ENCODE measurements at regions of chr6 and their contacts with region 1.

Region 1: DNA sequence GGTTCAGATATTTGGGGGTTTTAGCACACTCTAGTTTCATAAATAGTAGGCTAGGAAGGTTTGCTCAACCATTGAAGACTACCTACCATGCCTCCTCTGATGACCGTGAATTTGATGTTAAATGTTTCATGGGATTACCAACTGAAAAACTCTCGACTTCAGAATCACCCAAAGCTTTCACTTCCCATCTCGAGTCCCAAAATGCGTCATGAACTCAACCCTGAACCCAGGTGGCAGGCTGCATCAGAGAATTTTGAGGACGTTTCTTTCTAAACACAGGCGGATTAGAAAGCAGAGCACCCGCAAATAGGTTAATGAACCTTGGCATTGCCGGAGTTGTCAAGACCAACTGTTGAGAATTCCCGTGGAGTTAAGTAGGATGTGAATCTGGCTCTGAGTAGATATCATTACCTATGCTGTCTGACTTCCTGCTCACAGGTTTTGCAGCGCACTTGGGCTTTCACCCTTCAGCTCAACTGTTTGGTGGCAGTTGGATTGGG is 98.4 kb upstream of the ADTRP start:
- DNase-seq: peak; percentile 91
- ATAC-seq: peak; percentile 90
- H3K4me3 ChIP-seq: peak overlapping the region; percentile 22; the same call in 1 of the 2 replicates
- H3K27ac ChIP-seq: peak overlapping the region; percentile 82
- H3K4me1 ChIP-seq: peaks cover 19% of the 10 kb centered on the region
- H3K27me3 ChIP-seq: no peaks in the 10 kb centered on the region
- CTCF ChIP-seq: no peak
- EP300 ChIP-seq: peak; percentile 92 to 94; a peak in 3 of 4 replicates
- POLR2A ChIP-seq: no peak
- RAD21 ChIP-seq: no peak; the same call in 1 of the 2 replicates

Region 2: DNA sequence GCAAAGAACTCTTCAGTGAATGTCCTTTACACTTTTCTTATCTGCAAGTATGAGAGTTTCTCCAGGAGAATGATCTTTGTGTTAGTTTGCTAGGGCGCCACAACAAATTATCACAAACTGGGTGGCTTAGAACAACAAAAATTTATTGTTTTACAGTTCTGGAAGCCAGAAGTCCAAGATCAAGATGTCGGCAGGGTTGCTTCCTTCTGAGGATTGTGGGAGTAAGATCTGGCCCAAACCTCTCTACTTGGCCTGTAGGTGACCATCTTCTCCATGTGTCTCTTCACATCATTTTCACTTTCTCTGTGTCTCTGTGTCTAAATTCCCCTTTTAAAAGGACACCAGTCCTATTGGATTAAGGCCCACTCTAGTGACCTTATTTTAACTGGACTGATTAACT is 201.4 kb before region 1 on chr6:
- CTCF ChIA-PET with region 1: no interaction called
- POLR2A ChIA-PET with region 1: no interaction called
- RAD21 ChIA-PET with region 1: no interaction called
- SMC1A ChIA-PET with region 1: no interaction called
- in situ Hi-C with region 1: no loop called
- intact Hi-C with region 1: no loop called
- DNase-seq: no peak
- ATAC-seq: no peak
- H3K4me3 ChIP-seq: no peak overlapping the region
- H3K27ac ChIP-seq: no peak overlapping the region
- H3K4me1 ChIP-seq: no peaks in the 10 kb centered on the region
- H3K27me3 ChIP-seq: no peaks in the 10 kb centered on the region
- CTCF ChIP-seq: no peak
- EP300 ChIP-seq: no peak
- POLR2A ChIP-seq: no peak
- RAD21 ChIP-seq: no peak

Region 3: GRCh38 chr6:11722805-11723631 is 154.0 kb before region 1 on chr6:
- CTCF ChIA-PET with region 1: no interaction called
- POLR2A ChIA-PET with region 1: interaction called, 3 read pairs
- RAD21 ChIA-PET with region 1: interaction called, 14 read pairs
- SMC1A ChIA-PET with region 1: interaction called, 23 read pairs
- in situ Hi-C with region 1: no loop called
- intact Hi-C with region 1: no loop called
- DNase-seq: no peak
- ATAC-seq: peak; percentile 78
- H3K4me3 ChIP-seq: peak overlapping the region; percentile 63
- H3K27ac ChIP-seq: peak overlapping the region; percentile 88
- H3K4me1 ChIP-seq: peaks cover 8% of the 10 kb centered on the region
- H3K27me3 ChIP-seq: no peaks in the 10 kb centered on the region
- CTCF ChIP-seq: no peak
- EP300 ChIP-seq: no peak
- POLR2A ChIP-seq: no peak; the same call in 1 of the 2 replicates
- RAD21 ChIP-seq: 0 out of 2 replicates have a peak, but pooled peaks have one; percentile 4

Region 4: DNA sequence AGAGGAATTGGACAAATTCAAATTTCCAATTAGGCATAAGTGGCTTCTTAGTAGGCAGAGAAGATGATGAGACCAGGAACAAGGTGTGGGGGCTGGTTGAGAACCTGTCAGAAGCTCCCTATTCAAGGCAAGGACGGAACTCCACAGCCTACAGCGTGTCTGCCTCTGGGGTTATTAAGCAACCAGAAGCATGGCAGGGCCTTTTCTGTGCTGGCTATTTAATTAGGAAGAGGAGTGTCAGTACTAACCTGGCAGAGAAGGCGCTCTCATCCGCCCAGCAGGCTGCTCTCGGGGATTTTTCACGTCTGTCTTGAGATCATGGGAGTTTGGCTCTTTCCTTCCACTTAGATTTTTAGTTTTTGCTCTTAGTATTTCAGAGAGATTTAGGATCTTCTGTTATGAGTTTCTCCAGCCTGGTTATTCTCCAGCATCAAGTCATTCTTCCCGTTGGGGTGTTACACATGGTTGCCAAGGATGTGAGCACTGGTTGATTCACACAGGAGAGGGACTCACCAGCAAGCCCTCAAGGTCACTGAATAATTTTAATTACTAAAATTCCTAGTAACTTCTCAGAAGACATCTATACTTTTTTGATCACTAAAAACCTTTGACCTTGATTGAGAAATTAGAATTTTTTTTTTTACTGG is 122.2 kb before region 1 on chr6:
- CTCF ChIA-PET with region 1: no interaction called
- POLR2A ChIA-PET with region 1: no interaction called
- RAD21 ChIA-PET with region 1: no interaction called
- SMC1A ChIA-PET with region 1: no interaction called
- in situ Hi-C with region 1: no loop called
- intact Hi-C with region 1: no loop called
- DNase-seq: no peak
- ATAC-seq: no peak
- H3K4me3 ChIP-seq: no peak overlapping the region
- H3K27ac ChIP-seq: no peak overlapping the region
- H3K4me1 ChIP-seq: no peaks in the 10 kb centered on the region
- H3K27me3 ChIP-seq: no peaks in the 10 kb centered on the region
- CTCF ChIP-seq: no peak
- EP300 ChIP-seq: no peak
- POLR2A ChIP-seq: no peak
- RAD21 ChIP-seq: no peak

Region 5: DNA sequence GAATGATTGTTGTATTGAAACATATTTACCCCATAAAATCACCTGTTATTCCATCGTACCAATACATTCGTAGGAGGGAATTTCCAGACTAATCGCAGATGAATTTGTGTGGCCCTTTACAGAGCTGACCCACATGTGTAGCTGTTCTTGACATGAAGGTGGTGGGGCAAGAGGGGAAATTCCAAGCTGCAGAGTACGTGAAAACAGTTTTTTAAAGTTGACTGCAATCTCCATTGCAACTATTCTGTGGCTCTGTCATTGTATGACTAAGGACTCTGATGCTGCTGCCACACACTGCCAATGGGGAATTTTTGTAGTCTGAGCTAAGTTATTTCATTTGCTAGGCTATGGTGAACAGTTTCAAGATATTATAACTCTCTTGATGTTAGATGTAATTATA is 52.0 kb before region 1 on chr6:
- CTCF ChIA-PET with region 1: interaction called, 4 read pairs
- POLR2A ChIA-PET with region 1: interaction called, 5 read pairs
- RAD21 ChIA-PET with region 1: interaction called, 17 read pairs
- SMC1A ChIA-PET with region 1: interaction called, 44 read pairs
- in situ Hi-C with region 1: no loop called
- intact Hi-C with region 1: loop called (anchors 1 kb)
- DNase-seq: peak; percentile 91
- ATAC-seq: peak; percentile 86
- H3K4me3 ChIP-seq: no peak overlapping the region
- H3K27ac ChIP-seq: peak overlapping the region; percentile 70
- H3K4me1 ChIP-seq: peaks cover 47% of the 10 kb centered on the region
- H3K27me3 ChIP-seq: no peaks in the 10 kb centered on the region
- CTCF ChIP-seq: no peak
- EP300 ChIP-seq: peak; percentile 90; a peak in 3 of 4 replicates
- POLR2A ChIP-seq: no peak
- RAD21 ChIP-seq: peak; percentile 14

Region 6: DNA sequence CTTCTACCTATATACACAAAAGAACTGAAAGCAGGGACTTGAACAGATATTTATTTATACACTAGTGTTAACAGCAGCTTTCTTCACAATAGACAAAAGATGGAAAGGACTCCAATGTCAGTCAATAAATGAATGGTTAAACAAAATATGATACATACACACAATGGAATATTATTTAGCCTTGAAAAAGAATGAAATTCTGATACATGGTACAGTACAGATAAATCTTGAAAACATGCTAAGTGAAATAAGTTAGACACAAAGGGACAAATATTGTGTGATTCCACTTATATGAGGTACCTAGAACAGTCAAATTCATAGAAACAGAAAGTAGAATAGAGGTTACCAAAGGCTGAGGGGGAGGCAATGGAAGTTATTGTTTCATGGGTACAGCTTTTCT is 18.5 kb before region 1 on chr6:
- CTCF ChIA-PET with region 1: interaction called, 5 read pairs
- POLR2A ChIA-PET with region 1: interaction called, 4 read pairs
- RAD21 ChIA-PET with region 1: interaction called, 3 read pairs
- SMC1A ChIA-PET with region 1: interaction called, 10 read pairs
- in situ Hi-C with region 1: no loop called
- intact Hi-C with region 1: no loop called
- DNase-seq: no peak
- ATAC-seq: no peak
- H3K4me3 ChIP-seq: no peak overlapping the region
- H3K27ac ChIP-seq: no peak overlapping the region
- H3K4me1 ChIP-seq: peaks cover 10% of the 10 kb centered on the region
- H3K27me3 ChIP-seq: no peaks in the 10 kb centered on the region
- CTCF ChIP-seq: no peak
- EP300 ChIP-seq: no peak
- POLR2A ChIP-seq: no peak
- RAD21 ChIP-seq: no peak

Region 7: GRCh38 chr6:11894212-11894611 is 17.2 kb after region 1 on chr6:
- CTCF ChIA-PET with region 1: interaction called, 4 read pairs
- POLR2A ChIA-PET with region 1: no interaction called
- RAD21 ChIA-PET with region 1: no interaction called
- SMC1A ChIA-PET with region 1: interaction called, 26 read pairs
- in situ Hi-C with region 1: no loop called
- intact Hi-C with region 1: no loop called
- DNase-seq: no peak
- ATAC-seq: no peak
- H3K4me3 ChIP-seq: no peak overlapping the region
- H3K27ac ChIP-seq: no peak overlapping the region
- H3K4me1 ChIP-seq: no peaks in the 10 kb centered on the region
- H3K27me3 ChIP-seq: no peaks in the 10 kb centered on the region
- CTCF ChIP-seq: no peak
- EP300 ChIP-seq: no peak
- POLR2A ChIP-seq: no peak
- RAD21 ChIP-seq: no peak

Region 8: DNA sequence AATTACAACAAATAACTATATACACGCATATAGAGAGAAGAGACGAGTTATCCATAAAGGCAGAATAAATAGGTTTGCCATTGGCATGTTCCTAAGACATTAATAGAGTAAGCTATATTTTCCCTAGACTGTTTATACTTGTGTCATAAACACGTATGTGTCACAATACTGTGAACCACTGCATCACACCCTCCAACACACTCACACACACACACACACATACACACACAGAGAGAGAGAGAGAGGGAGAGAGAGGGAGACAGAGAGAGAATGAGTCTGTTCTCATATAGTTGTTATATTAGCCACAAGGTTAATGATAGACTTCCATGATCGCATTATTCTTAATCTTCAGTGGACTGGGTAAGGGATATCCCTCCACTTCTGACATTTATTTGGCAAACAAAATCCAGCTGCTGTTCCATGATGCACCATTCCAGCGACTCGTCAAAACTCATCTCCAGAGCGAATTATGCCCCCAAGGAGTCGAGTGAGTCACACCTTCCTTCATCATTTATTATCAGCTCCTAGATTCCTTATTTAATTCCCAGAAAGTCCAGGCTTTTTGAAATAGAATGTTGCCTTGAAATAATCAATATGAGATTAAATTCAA is 52.4 kb after region 1 on chr6:
- CTCF ChIA-PET with region 1: no interaction called
- POLR2A ChIA-PET with region 1: no interaction called
- RAD21 ChIA-PET with region 1: no interaction called
- SMC1A ChIA-PET with region 1: no interaction called
- in situ Hi-C with region 1: no loop called
- intact Hi-C with region 1: no loop called
- DNase-seq: no peak
- ATAC-seq: no peak
- H3K4me3 ChIP-seq: no peak overlapping the region
- H3K27ac ChIP-seq: no peak overlapping the region
- H3K4me1 ChIP-seq: no peaks in the 10 kb centered on the region
- H3K27me3 ChIP-seq: no peaks in the 10 kb centered on the region
- CTCF ChIP-seq: no peak
- EP300 ChIP-seq: no peak
- POLR2A ChIP-seq: no peak
- RAD21 ChIP-seq: no peak

Measured in GM12878 (cell line).